BJ (cell line): ENCODE measurements at regions of chr15 and their contacts with region 1.

Region 1: GRCh38 chr15:61917457-61917856 is 142.8 kb downstream of the VPS13C start:
- DNase-seq: no peak
- H3K4me3 ChIP-seq: no peak overlapping the region
- H3K27me3 ChIP-seq: no peaks in the 10 kb centered on the region
- CTCF ChIP-seq: no peak

Region 2: GRCh38 chr15:61835496-61836106 is 81.9 kb before region 1 on chr15:
- CTCF ChIA-PET with region 1: no interaction called
- POLR2A ChIA-PET with region 1: no interaction called
- DNase-seq: peak; percentile 0
- H3K4me3 ChIP-seq: no peak overlapping the region
- H3K27me3 ChIP-seq: no peaks in the 10 kb centered on the region
- CTCF ChIP-seq: peak; percentile 96

Region 3: DNA sequence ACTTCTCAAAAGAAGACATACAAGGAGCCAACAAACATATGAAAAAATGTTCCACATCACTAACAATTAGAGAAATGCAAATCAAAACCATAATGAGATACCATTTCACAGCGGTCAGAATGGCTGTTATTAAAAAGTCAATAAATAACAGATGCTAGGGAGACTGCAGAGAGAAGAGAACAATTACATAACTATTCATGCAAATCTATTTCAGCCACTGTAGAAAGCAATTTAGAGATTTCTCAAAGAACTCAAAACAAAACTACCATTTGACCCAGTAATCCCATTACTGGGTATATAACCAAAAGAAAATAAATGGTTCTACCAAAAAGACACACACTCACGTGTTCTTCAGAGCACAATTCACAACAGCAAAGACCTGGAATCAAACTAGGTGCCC is 26.5 kb after region 1 on chr15:
- CTCF ChIA-PET with region 1: interaction called, 3 read pairs
- POLR2A ChIA-PET with region 1: interaction called, 10 read pairs
- DNase-seq: no peak
- H3K4me3 ChIP-seq: no peak overlapping the region
- H3K27me3 ChIP-seq: no peaks in the 10 kb centered on the region
- CTCF ChIP-seq: no peak